SK-MEL-5 (cell line): ENCODE measurements at regions of chr2 and their contacts with region 1.

Region 1: DNA sequence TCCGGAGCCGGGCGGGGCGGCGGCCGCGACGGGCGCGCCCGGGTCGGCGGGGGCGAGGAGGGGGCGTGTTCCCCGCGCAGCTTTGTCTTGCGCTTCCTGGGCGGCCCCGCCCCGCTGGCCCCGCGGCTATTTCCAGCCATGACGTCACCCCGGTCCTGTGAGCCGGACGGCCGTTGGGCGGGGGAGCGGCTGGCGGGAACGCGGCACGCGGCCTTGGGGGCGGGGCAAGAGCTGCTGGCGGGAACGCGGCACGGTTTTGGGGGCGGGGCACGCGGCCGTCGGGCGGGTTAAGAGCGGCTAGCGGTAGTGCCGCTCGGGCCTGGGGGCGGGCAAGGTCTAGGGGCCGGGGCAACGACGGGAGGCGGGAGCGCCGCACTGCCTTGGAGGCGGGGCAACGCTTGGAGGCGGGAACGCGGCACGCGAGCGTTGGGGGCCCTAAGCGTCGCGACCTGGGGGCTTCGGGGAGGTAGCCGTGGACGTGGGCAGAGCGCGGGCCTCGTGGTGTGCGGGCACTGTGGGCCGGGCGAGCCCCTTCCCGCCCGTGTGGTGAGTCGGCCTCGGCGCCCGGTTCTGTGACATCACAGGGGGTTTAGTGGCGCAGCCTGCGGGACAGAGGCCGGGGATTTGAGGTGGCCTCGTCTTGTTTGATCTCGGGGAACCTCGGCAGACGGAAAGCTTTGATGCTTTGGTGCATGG is 704 bp downstream of the KLF11 start:
- DNase-seq: peak; percentile 94

Region 2: GRCh38 chr2:9799665-9800632 is 244.1 kb before region 1 on chr2:
- in situ Hi-C with region 1: loop called (anchors 25 kb)
- DNase-seq: peak; percentile 88